GM12878 (cell line): ENCODE measurements at regions of chr1 and their contacts with region 1.

Region 1: GRCh38 chr1:66446261-66447001 is 87.5 kb upstream of the SGIP1 start:
- DNase-seq: peak; percentile 63
- ATAC-seq: peak; percentile 73
- H3K4me3 ChIP-seq: no peak overlapping the region
- H3K27ac ChIP-seq: peak overlapping the region; percentile 98
- H3K4me1 ChIP-seq: peaks cover 12% of the 10 kb centered on the region
- H3K27me3 ChIP-seq: no peaks in the 10 kb centered on the region
- CTCF ChIP-seq: peak; percentile 71 to 84 (median 78); a peak in 5 of 6 replicates
- EP300 ChIP-seq: no peak
- POLR2A ChIP-seq: no peak
- RAD21 ChIP-seq: peak; percentile 99

Region 2: DNA sequence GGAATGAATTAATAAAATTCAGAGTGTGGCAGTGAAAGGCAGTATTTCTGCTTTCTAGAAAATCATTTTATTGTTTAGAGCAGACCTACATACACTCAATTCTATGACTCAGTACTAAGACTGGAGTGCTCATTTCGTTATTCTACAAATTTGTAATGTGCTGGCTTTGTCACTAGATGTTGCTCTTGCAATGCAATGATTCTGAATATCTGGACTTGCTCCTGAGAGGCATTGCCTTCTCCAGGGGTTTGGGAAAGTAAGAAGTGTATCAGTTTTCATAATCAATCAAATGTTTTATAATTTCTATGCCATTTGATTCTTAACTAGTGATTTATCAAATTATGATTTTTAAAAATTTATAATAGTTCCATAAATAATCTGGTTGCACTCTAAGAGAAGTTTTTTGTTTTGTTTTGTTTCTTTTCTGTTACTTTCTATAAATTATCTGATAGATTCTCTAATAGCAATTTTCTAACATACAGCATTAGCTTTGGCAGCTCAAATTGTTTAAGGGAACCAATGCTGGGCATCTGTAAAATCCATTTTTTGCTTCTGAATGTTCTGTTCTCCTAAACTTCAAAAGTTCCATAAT is 193.0 kb before region 1 on chr1:
- CTCF ChIA-PET with region 1: interaction called, 595 read pairs
- POLR2A ChIA-PET with region 1: interaction called, 5 read pairs
- RAD21 ChIA-PET with region 1: interaction called, 519 read pairs
- SMC1A ChIA-PET with region 1: interaction called, 663 read pairs
- in situ Hi-C with region 1: loop called (anchors 5 kb)
- intact Hi-C with region 1: loop called (anchors 1 kb)
- DNase-seq: peak; percentile 55
- ATAC-seq: peak; percentile 90
- H3K4me3 ChIP-seq: no peak overlapping the region
- H3K27ac ChIP-seq: no peak overlapping the region
- H3K4me1 ChIP-seq: peaks cover 1% of the 10 kb centered on the region; the same call in 1 of the 2 replicates
- H3K27me3 ChIP-seq: no peaks in the 10 kb centered on the region
- CTCF ChIP-seq: peak; percentile 75 to 92 (median 81)
- EP300 ChIP-seq: no peak
- POLR2A ChIP-seq: no peak
- RAD21 ChIP-seq: peak; percentile 100

Region 3: GRCh38 chr1:66300972-66301451 is 145.4 kb before region 1 on chr1:
- CTCF ChIA-PET with region 1: interaction called, 7 read pairs
- POLR2A ChIA-PET with region 1: no interaction called
- RAD21 ChIA-PET with region 1: interaction called, 14 read pairs
- SMC1A ChIA-PET with region 1: interaction called, 8 read pairs
- in situ Hi-C with region 1: no loop called
- intact Hi-C with region 1: no loop called
- DNase-seq: peak; percentile 53
- ATAC-seq: peak; percentile 92
- H3K4me3 ChIP-seq: peak overlapping the region; percentile 56; the same call in 1 of the 2 replicates
- H3K27ac ChIP-seq: peak overlapping the region; percentile 63
- H3K4me1 ChIP-seq: peaks cover 22% of the 10 kb centered on the region; the same call in 1 of the 2 replicates
- H3K27me3 ChIP-seq: no peaks in the 10 kb centered on the region
- CTCF ChIP-seq: no peak
- EP300 ChIP-seq: no peak
- POLR2A ChIP-seq: no peak
- RAD21 ChIP-seq: no peak

Region 4: DNA sequence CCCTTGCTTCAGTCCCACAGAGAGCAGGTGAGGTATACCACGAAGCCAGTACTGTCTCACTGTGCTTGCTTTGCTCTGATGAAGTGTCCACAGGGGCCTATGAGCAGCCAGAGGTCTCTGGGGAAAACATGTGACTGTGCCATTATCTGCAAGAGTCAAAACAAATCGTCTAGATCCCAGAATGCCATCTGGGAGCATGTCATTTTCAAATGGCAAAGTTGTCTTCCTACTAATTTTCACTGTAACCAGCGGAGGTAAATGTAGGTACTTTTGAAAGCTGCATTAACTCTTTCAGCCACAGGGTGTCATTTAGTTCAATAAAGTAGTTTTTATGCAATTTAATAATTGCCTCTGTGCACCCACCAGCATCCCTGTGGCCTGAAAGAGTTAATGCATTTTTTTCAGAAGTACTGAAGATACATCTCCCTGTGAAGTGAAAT is 86.1 kb before region 1 on chr1:
- CTCF ChIA-PET with region 1: interaction called, 396 read pairs
- POLR2A ChIA-PET with region 1: interaction called, 5 read pairs
- RAD21 ChIA-PET with region 1: interaction called, 70 read pairs
- SMC1A ChIA-PET with region 1: interaction called, 178 read pairs
- in situ Hi-C with region 1: no loop called
- intact Hi-C with region 1: no loop called
- DNase-seq: no peak
- ATAC-seq: peak; percentile 51
- H3K4me3 ChIP-seq: no peak overlapping the region
- H3K27ac ChIP-seq: no peak overlapping the region
- H3K4me1 ChIP-seq: peaks cover 16% of the 10 kb centered on the region
- H3K27me3 ChIP-seq: no peaks in the 10 kb centered on the region
- CTCF ChIP-seq: peak; percentile 30 to 44 (median 37); a peak in 4 of 6 replicates
- EP300 ChIP-seq: no peak
- POLR2A ChIP-seq: no peak
- RAD21 ChIP-seq: peak; percentile 59

Region 5: DNA sequence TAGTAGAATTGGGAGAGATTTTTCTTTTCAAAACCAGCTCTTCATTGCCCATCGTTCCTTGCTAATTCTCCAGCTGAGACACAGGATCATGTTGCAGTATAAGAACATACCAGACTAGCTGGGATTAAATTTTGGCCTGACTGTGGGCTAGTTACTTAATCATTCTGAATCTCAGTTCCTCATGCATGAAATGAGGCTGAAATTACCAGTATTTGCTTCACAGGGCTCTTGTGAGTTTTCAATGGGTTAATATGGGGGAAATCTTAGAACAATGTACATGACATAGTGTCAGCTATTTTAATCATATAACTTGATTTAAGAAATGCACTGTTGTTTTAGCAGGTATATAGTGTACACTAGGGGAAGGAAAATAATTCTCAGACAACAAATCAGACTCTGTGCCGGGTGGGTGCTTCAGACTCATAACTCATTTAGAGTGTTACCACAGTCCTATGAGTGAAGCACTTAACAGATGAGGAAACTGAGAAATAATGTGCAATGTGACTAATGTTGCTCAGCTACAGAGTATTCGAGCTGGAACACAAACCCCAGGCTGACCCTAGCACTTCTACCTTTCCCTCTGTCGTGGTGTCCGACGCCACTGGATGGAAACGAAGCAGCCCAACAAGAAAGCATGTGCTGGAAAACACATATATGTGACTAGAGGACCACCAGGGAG is 50.1 kb before region 1 on chr1:
- CTCF ChIA-PET with region 1: interaction called, 48 read pairs
- POLR2A ChIA-PET with region 1: interaction called, 6 read pairs
- RAD21 ChIA-PET with region 1: interaction called, 49 read pairs
- SMC1A ChIA-PET with region 1: interaction called, 75 read pairs
- in situ Hi-C with region 1: no loop called
- intact Hi-C with region 1: no loop called
- DNase-seq: peak; percentile 71
- ATAC-seq: peak; percentile 76
- H3K4me3 ChIP-seq: no peak overlapping the region
- H3K27ac ChIP-seq: peak overlapping the region; percentile 80
- H3K4me1 ChIP-seq: peaks cover 75% of the 10 kb centered on the region
- H3K27me3 ChIP-seq: no peaks in the 10 kb centered on the region
- CTCF ChIP-seq: no peak
- EP300 ChIP-seq: peak in 1 of 2 experiments; percentile 52; a peak in 2 of 4 replicates
- POLR2A ChIP-seq: no peak
- RAD21 ChIP-seq: no peak; the same call in 1 of the 2 replicates

Region 6: DNA sequence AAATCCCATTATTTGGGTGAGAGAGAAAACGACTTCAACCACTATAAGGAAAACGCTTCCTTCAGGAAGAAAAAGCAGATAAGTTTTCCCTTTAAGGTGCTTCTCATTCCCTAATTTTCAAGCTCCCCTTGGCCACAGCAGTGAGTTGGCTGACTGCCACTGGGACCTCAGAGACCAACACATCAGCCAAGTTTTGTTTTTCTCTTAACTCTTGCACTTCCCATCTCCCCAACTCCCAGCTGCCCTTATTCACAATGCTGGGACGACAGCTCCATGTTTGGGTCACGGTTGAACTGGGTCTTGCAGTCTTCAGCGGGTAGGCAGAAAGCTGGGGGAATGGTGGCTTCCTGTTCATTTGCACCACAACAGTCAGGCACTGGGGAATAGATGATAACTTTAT is 106.4 kb after region 1 on chr1:
- CTCF ChIA-PET with region 1: no interaction called
- POLR2A ChIA-PET with region 1: no interaction called
- RAD21 ChIA-PET with region 1: no interaction called
- SMC1A ChIA-PET with region 1: no interaction called
- in situ Hi-C with region 1: no loop called
- intact Hi-C with region 1: no loop called
- DNase-seq: no peak
- ATAC-seq: no peak
- H3K4me3 ChIP-seq: no peak overlapping the region
- H3K27ac ChIP-seq: no peak overlapping the region
- H3K4me1 ChIP-seq: no peaks in the 10 kb centered on the region
- H3K27me3 ChIP-seq: no peaks in the 10 kb centered on the region
- CTCF ChIP-seq: no peak
- EP300 ChIP-seq: no peak
- POLR2A ChIP-seq: no peak
- RAD21 ChIP-seq: no peak

Region 7: GRCh38 chr1:66575739-66576138 is 129.3 kb after region 1 on chr1:
- CTCF ChIA-PET with region 1: no interaction called
- POLR2A ChIA-PET with region 1: no interaction called
- RAD21 ChIA-PET with region 1: no interaction called
- SMC1A ChIA-PET with region 1: no interaction called
- in situ Hi-C with region 1: no loop called
- intact Hi-C with region 1: no loop called
- DNase-seq: no peak
- ATAC-seq: no peak
- H3K4me3 ChIP-seq: no peak overlapping the region
- H3K27ac ChIP-seq: no peak overlapping the region
- H3K4me1 ChIP-seq: no peaks in the 10 kb centered on the region
- H3K27me3 ChIP-seq: no peaks in the 10 kb centered on the region
- CTCF ChIP-seq: no peak
- EP300 ChIP-seq: no peak
- POLR2A ChIP-seq: no peak
- RAD21 ChIP-seq: no peak

Region 8: GRCh38 chr1:66725885-66726665 is 279.6 kb after region 1 on chr1:
- CTCF ChIA-PET with region 1: interaction called, 3 read pairs
- POLR2A ChIA-PET with region 1: no interaction called
- RAD21 ChIA-PET with region 1: interaction called, 6 read pairs
- SMC1A ChIA-PET with region 1: interaction called, 4 read pairs
- in situ Hi-C with region 1: no loop called
- intact Hi-C with region 1: loop called (anchors 2 kb)
- DNase-seq: peak; percentile 26
- ATAC-seq: peak; percentile 93
- H3K4me3 ChIP-seq: no peak overlapping the region
- H3K27ac ChIP-seq: no peak overlapping the region
- H3K4me1 ChIP-seq: no peaks in the 10 kb centered on the region
- H3K27me3 ChIP-seq: peaks cover 0 to 8% of the 10 kb centered on the region in 2 experiments; a peak in 1 of 4 replicates
- CTCF ChIP-seq: peak; percentile 89 to 93 (median 90)
- EP300 ChIP-seq: no peak
- POLR2A ChIP-seq: no peak
- RAD21 ChIP-seq: peak; percentile 89